Ovary (tissue), 10 donors: ENCODE measurements at regions of chr17 and their contacts with region 1.

Region 1: GRCh38 chr17:82129095-82129494 is 31.1 kb upstream of the FASN start:
- DNase-seq: no peak
- H3K4me3 ChIP-seq: no peak overlapping the region
- H3K27ac ChIP-seq: no peak overlapping the region
- H3K4me1 ChIP-seq: no peaks in the 10 kb centered on the region
- H3K27me3 ChIP-seq: no peaks in the 10 kb centered on the region
- CTCF ChIP-seq: no peak
- EP300 ChIP-seq: no peak
- POLR2A ChIP-seq: no peak

Region 2: GRCh38 chr17:82188001-82188961 is 59.2 kb after region 1 on chr17:
- intact Hi-C with region 1: loop called in 1 of 4 experiments (anchors 5 kb)
- DNase-seq: no peak
- H3K4me3 ChIP-seq: no peak overlapping the region
- H3K27ac ChIP-seq: no peak overlapping the region
- H3K4me1 ChIP-seq: no peaks in the 10 kb centered on the region
- H3K27me3 ChIP-seq: no peaks in the 10 kb centered on the region
- CTCF ChIP-seq: no peak
- EP300 ChIP-seq: no peak
- POLR2A ChIP-seq: no peak